Mammary epithelial cell (primary cell): ENCODE measurements at regions of chr1 and their contacts with region 1.

Region 1: GRCh38 chr1:181718034-181718433 is 234.7 kb downstream of the CACNA1E start:
- DNase-seq: no peak
- H3K4me3 ChIP-seq: no peak overlapping the region
- H3K27ac ChIP-seq: no peak overlapping the region
- H3K4me1 ChIP-seq: no peaks in the 10 kb centered on the region
- H3K27me3 ChIP-seq: peaks cover 3% of the 10 kb centered on the region
- CTCF ChIP-seq: no peak

Region 2: DNA sequence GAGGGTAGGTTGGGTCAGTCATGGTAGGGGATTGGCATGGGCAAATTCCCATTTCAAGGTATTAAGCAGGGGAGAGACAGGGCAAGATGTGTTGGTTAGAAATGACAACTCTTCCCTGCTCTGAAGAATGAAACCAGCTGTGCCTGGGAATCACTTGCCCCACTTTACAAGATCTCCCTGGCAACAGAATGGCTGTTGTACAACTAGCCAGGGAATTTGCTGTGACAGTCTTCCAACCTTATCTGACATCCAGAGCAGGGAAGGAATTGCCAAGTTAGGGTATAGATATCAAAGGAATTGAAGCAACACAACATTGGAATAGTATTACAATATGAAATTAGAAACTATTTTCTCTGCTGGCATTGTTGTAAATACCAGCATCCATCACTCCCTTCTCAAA is 80.0 kb before region 1 on chr1:
- CTCF ChIA-PET with region 1: no interaction called
- dilution Hi-C with region 1: loop called (anchors 5 kb)
- in situ Hi-C with region 1: no loop called
- intact Hi-C with region 1: no loop called
- DNase-seq: no peak
- H3K4me3 ChIP-seq: no peak overlapping the region
- H3K27ac ChIP-seq: no peak overlapping the region
- H3K4me1 ChIP-seq: no peaks in the 10 kb centered on the region
- H3K27me3 ChIP-seq: peaks cover 6% of the 10 kb centered on the region
- CTCF ChIP-seq: no peak

Region 3: DNA sequence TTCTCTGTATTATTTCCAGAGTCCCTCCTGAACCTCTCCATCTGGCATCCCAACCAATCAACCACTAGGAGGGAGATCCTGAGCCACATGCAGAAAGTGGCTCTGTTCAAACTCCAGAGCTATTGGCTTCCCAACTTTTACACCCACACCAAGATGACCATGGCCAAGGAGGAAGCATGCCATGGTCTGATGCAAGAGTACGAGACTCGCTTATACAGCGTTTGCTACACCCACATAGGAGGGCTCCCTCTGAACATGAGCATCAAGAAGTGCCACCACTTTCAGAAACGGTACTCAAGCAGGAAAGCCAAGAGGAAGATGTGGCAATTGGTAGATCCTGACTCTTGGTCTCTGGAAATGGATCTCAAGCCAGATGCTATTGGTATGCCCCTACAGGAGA is 755.5 kb after region 1 on chr1:
- CTCF ChIA-PET with region 1: no interaction called
- dilution Hi-C with region 1: no loop called
- in situ Hi-C with region 1: no loop called
- intact Hi-C with region 1: no loop called
- DNase-seq: no peak
- H3K4me3 ChIP-seq: no peak overlapping the region
- H3K27ac ChIP-seq: no peak overlapping the region
- H3K4me1 ChIP-seq: no peaks in the 10 kb centered on the region
- H3K27me3 ChIP-seq: peaks cover 4% of the 10 kb centered on the region
- CTCF ChIP-seq: no peak